WTC11 (cell line): ENCODE measurements at regions of chrX and their contacts with region 1.

Region 1: DNA sequence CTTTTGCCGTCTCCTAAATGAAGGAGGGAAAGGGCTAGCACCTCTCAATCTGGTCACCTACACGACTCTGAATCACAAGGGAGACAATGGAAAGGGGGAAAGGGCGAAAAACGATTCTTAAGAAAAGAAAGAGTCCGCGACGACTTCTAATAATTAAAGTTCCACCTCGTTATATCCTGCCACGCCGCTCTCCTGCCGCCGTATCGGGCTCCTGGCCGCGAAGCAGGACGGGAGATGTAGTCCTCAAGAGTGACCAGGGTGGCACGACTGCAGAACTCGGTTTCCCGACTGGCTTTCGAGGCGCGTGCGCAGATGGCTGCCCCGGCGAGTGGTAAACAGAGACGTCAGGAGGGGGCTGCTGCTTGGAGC is at the start of gene FOXO4:
- DNase-seq: peak; percentile 90
- ATAC-seq: peak; percentile 67
- H3K4me3 Mint-ChIP-seq: peak within 1 kb of the TSS; percentile 99
- H3K27ac Mint-ChIP-seq: peak within 1 kb of the TSS; percentile 99
- H3K4me1 Mint-ChIP-seq: peaks cover 38% of the 10 kb centered on the region
- H3K27me3 Mint-ChIP-seq: no peaks in the 10 kb centered on the region; the same call in 1 of the 2 replicates
- CTCF ChIP-seq: no peak
- total RNA-seq, gene FOXO4: 35.3 to 48.3 TPM (median 37.0 TPM) in 3 replicates

Region 2: GRCh38 chrX:70988425-70988824 is 107.1 kb before region 1 on chrX:
- CTCF ChIA-PET with region 1: no interaction called
- POLR2A ChIA-PET with region 1: no interaction called
- DNase-seq: no peak
- ATAC-seq: no peak
- H3K4me3 Mint-ChIP-seq: no peak overlapping the region
- H3K27ac Mint-ChIP-seq: no peak overlapping the region
- H3K4me1 Mint-ChIP-seq: no peaks in the 10 kb centered on the region
- H3K27me3 Mint-ChIP-seq: no peaks in the 10 kb centered on the region; the same call in 1 of the 2 replicates
- CTCF ChIP-seq: no peak

Region 3: GRCh38 chrX:71068049-71068763 is 27.3 kb before region 1 on chrX and contains the start of gene SNX12:
- CTCF ChIA-PET with region 1: no interaction called
- POLR2A ChIA-PET with region 1: interaction called, 11 read pairs
- DNase-seq: peak; percentile 85
- ATAC-seq: peak; percentile 98
- H3K4me3 Mint-ChIP-seq: peak within 1 kb of the TSS; percentile 94
- H3K27ac Mint-ChIP-seq: peak within 1 kb of the TSS; percentile 90
- H3K4me1 Mint-ChIP-seq: peaks cover 7% of the 10 kb centered on the region
- H3K27me3 Mint-ChIP-seq: no peaks in the 10 kb centered on the region; the same call in 1 of the 2 replicates
- CTCF ChIP-seq: no peak
- total RNA-seq, gene SNX12: 69.4 to 79.6 TPM (median 74.2 TPM) in 3 replicates

Region 4: DNA sequence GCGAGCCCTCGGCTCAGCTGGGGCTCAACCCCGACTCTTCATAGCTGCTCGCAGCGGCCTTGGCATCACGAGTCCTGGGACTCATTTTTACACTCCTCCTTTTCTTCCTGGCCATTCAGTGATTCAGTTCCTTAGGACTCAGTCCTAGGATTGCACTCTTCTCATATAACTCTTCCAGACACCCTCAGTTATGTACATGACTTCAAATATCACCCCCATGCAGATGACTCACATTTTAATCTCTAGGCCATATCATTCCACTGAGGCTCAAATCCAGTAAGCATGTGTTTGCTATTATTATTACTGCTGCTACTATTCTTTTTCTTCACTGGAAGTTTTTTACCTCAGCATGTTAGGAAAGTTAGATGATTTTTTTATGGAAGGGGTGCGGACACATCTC is 220.4 kb after region 1 on chrX:
- CTCF ChIA-PET with region 1: no interaction called
- POLR2A ChIA-PET with region 1: no interaction called
- DNase-seq: no peak
- ATAC-seq: no peak
- H3K4me3 Mint-ChIP-seq: no peak overlapping the region
- H3K27ac Mint-ChIP-seq: no peak overlapping the region
- H3K4me1 Mint-ChIP-seq: no peaks in the 10 kb centered on the region
- H3K27me3 Mint-ChIP-seq: no peaks in the 10 kb centered on the region
- CTCF ChIP-seq: no peak